ENCODE measurements at regions of chr6 and their contacts with region 1.

Region 1: DNA sequence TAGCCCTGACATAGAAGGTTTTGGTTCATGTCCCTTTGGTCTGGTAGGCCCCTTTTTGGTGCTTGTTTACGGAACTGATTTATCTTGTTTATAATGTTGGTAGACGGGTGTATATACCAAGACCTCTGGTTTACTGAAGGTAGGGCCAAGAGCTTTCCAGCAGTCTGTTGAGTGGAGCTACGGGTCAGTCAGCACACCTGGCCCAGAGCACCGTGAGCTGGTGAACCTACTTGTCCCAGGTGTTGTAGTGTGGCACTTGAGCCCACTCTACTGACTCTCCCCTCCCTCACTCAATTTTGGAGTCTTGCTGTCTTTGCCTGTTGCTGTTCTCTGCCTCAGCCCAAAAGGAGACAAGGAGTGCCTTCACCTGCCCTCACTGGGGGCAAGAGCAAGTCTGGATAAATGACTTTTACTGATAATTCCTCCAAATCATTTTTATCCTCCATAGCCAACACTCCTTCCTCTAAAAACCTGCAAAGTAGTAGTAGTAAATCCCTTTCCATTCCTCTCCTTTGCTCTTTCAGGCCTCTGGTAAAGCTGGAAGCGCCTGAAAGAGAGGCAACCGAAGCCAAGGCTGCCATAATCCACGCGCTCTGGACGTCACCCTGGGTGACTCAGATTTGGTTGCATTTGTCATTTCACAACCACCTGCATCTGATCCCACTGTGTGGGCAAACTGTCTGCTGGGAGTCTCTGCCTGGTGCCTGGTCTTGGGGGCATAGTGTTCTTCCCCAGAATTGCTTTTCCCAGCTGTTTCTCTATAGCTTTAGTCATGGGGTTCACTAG is 22.2 kb downstream of the RREB1 start:
- DNase-seq: peak in 2 of 3 donors; percentile 68
- H3K4me3 ChIP-seq: no peak overlapping the region
- H3K27ac ChIP-seq: peak overlapping the region in 1 of 2 experiments; percentile 39
- H3K4me1 ChIP-seq: peaks cover 3 to 72% (median 17%) of the 10 kb centered on the region in 4 experiments
- H3K27me3 ChIP-seq: no peaks in the 10 kb centered on the region

Region 2: GRCh38 chr6:7106752-7107577 is 23.0 kb before region 1 on chr6:
- CTCF ChIA-PET with region 1: interaction called, 83 read pairs
- POLR2A ChIA-PET with region 1: interaction called, 4 read pairs
- DNase-seq: peak; percentile 85 to 93 (median 91)
- H3K4me3 ChIP-seq: peak overlapping the region; percentile 87 to 99 (median 93)
- H3K27ac ChIP-seq: peak overlapping the region; percentile 68 to 84
- H3K4me1 ChIP-seq: peaks cover 5 to 41% (median 26%) of the 10 kb centered on the region in 4 experiments
- H3K27me3 ChIP-seq: no peaks in the 10 kb centered on the region

Measured in common myeloid progenitor, CD34-positive (primary cell).